ENCODE measurements at regions of chr20 and their contacts with region 1.

Region 1: GRCh38 chr20:362271-363254 is 15.7 kb downstream of the NRSN2 start:
- DNase-seq: peak; percentile 99
- ATAC-seq: peak; percentile 87
- H3K4me3 ChIP-seq: no peak overlapping the region
- H3K27ac ChIP-seq: peak overlapping the region; percentile 49
- H3K4me1 ChIP-seq: peaks cover 74% of the 10 kb centered on the region
- H3K27me3 ChIP-seq: no peaks in the 10 kb centered on the region
- CTCF ChIP-seq: peak; percentile 100
- EP300 ChIP-seq: peak in 1 of 2 experiments; percentile 92; a peak in 3 of 4 replicates
- POLR2A ChIP-seq: peak; percentile 46 to 53
- RAD21 ChIP-seq: peak; percentile 100

Region 2: GRCh38 chr20:407133-407952 is 44.8 kb after region 1 on chr20:
- CTCF ChIA-PET with region 1: interaction called, 5 read pairs
- POLR2A ChIA-PET with region 1: interaction called, 1,587 read pairs
- in situ Hi-C with region 1: no loop called
- intact Hi-C with region 1: loop called (anchors 2 kb)
- DNase-seq: peak; percentile 95
- ATAC-seq: peak; percentile 90
- H3K4me3 ChIP-seq: peak overlapping the region; percentile 49 to 79 (median 57)
- H3K27ac ChIP-seq: peak overlapping the region; percentile 96
- H3K4me1 ChIP-seq: peaks cover 81% of the 10 kb centered on the region
- H3K27me3 ChIP-seq: no peaks in the 10 kb centered on the region; a peak in 1 of 5 replicates
- CTCF ChIP-seq: peak; percentile 57
- EP300 ChIP-seq: peak; percentile 9 to 25; a peak in 1 of 4 replicates
- POLR2A ChIP-seq: peak; percentile 96 to 98
- RAD21 ChIP-seq: peak; percentile 87

Region 3: DNA sequence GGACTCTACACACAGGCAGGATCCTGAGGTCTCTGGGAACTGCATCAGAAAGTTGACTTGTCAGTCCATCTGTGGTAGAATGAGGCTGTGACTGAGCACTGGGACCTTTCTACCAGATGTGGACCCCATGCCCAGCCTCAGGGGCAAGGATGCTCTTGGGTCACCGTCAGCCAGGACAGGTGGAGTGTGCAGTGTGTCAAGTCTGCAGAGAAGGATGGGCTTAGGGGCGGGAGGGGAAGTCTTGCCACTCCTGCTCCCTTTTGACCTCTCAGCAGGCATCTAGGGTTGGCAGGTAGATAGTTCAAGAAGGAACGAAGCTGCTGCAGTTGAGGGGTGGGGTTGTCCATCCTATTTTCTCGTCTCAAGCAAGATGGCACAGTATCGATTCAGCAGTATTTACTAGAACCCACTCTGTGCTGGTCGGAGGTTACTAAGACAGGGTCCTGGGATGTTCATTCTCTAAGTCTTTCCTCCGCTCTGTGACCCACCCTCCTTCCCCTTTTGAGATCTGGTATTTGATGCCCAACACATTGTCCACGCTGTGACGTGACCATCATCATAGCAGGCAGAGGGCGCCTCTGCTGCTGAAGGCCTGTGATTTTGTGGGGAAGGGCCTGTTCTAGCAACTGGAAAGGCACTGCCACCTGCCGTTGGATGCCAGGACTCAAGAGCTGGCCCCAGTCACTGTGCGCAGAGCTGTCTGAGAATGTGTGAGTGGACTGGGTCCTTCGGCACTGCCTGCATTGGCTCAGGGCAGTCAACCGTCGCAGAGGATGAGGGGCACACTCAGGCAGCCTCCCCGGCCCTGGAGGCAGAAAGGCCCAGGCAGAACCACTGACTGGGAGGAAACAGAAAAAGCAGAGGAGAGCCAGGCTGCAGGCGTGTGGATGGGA is 68.7 kb after region 1 on chr20:
- CTCF ChIA-PET with region 1: interaction called, 26 read pairs
- POLR2A ChIA-PET with region 1: interaction called, 61 read pairs
- in situ Hi-C with region 1: no loop called
- intact Hi-C with region 1: loop called (anchors 1 kb)
- DNase-seq: peak; percentile 93
- ATAC-seq: peak; percentile 84
- H3K4me3 ChIP-seq: no peak overlapping the region
- H3K27ac ChIP-seq: no peak overlapping the region
- H3K4me1 ChIP-seq: 0 out of 2 replicates have a peak, but pooled peaks cover 7% of the 10 kb centered on the region
- H3K27me3 ChIP-seq: no peaks in the 10 kb centered on the region
- CTCF ChIP-seq: peak; percentile 99
- EP300 ChIP-seq: no peak; a peak in 1 of 4 replicates
- POLR2A ChIP-seq: peak in 1 of 2 experiments; percentile 62; a peak in 3 of 4 replicates
- RAD21 ChIP-seq: peak; percentile 100

Region 4: DNA sequence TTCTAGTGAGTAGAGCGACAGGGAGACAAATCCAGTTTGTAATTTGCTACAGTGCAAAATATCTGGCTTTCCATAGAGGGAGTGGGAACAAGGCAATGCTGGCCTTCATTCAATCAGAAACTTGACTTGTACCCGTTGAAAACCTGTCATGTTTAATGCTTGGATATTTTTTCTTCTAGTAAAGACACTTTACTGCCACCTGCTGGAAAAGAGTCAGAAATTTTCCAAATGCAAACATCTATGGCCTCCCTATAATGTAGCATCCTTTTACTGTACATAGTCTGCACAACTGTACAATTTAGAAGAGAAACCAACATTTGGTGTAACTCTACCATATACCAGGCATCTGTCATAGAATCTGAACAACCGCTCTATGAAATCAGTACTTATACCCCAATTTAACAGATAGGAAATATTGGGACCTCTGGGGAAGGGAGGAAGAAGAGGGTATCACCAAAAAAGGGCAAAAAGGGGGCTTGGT is 116.4 kb after region 1 on chr20:
- CTCF ChIA-PET with region 1: interaction called, 4 read pairs
- POLR2A ChIA-PET with region 1: interaction called, 10 read pairs
- in situ Hi-C with region 1: no loop called
- intact Hi-C with region 1: no loop called
- DNase-seq: peak; percentile 84
- ATAC-seq: peak; percentile 60
- H3K4me3 ChIP-seq: no peak overlapping the region
- H3K27ac ChIP-seq: no peak overlapping the region
- H3K4me1 ChIP-seq: peaks cover 56% of the 10 kb centered on the region
- H3K27me3 ChIP-seq: no peaks in the 10 kb centered on the region
- CTCF ChIP-seq: peak; percentile 81
- EP300 ChIP-seq: 0 out of 4 replicates have a peak, but pooled peaks of 1 of the 2 experiments have one; percentile 25
- POLR2A ChIP-seq: no peak
- RAD21 ChIP-seq: peak; percentile 82

Region 5: GRCh38 chr20:645318-646106 is 282.9 kb after region 1 on chr20:
- CTCF ChIA-PET with region 1: no interaction called
- POLR2A ChIA-PET with region 1: interaction called, 4 read pairs
- in situ Hi-C with region 1: loop called (anchors 10 kb)
- intact Hi-C with region 1: loop called (anchors 5 kb)
- DNase-seq: peak; percentile 90
- ATAC-seq: peak; percentile 78
- H3K4me3 ChIP-seq: peak overlapping the region; percentile 15 to 71 (median 58)
- H3K27ac ChIP-seq: peak overlapping the region; percentile 86
- H3K4me1 ChIP-seq: peaks cover 49% of the 10 kb centered on the region
- H3K27me3 ChIP-seq: no peaks in the 10 kb centered on the region
- CTCF ChIP-seq: peak; percentile 100
- EP300 ChIP-seq: peak; percentile 32 to 53; a peak in 2 of 4 replicates
- POLR2A ChIP-seq: peak; percentile 43 to 53; a peak in 2 of 4 replicates
- RAD21 ChIP-seq: peak; percentile 99

Measured in HepG2 (cell line).